Breast epithelium (tissue), 4 donors: ENCODE measurements at regions of chr5 and their contacts with region 1.

Region 1: DNA sequence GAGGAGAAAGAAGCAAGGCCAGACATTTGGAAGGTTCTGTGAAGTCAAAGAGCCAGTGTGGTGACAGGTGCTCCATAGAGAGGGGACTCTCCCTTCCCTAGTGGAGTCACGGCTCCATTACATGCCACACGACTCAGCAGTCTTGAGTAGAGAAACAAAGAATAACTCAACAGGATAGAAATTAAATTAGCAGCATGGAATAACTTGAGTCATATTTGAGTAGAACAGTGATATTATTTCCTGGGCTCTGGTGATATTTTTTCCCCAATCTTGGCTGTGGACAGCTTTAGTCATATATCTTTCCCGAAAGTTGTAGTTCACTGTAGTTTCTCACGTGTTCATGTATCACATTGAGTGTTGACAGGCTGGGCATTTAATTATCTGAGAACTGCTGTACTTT is 149.7 kb upstream of the EFNA5 start:
- DNase-seq: no peak
- H3K4me3 ChIP-seq: no peak overlapping the region
- H3K27ac ChIP-seq: no peak overlapping the region
- H3K4me1 ChIP-seq: no peaks in the 10 kb centered on the region
- H3K27me3 ChIP-seq: no peaks in the 10 kb centered on the region
- CTCF ChIP-seq: no peak
- POLR2A ChIP-seq: no peak

Region 2: GRCh38 chr5:107764976-107765804 is 55.2 kb before region 1 on chr5:
- intact Hi-C with region 1: no loop called
- DNase-seq: no peak
- H3K4me3 ChIP-seq: no peak overlapping the region
- H3K27ac ChIP-seq: no peak overlapping the region
- H3K4me1 ChIP-seq: no peaks in the 10 kb centered on the region
- H3K27me3 ChIP-seq: no peaks in the 10 kb centered on the region
- CTCF ChIP-seq: no peak
- POLR2A ChIP-seq: no peak

Region 3: GRCh38 chr5:108059334-108059733 is 238.9 kb after region 1 on chr5:
- intact Hi-C with region 1: loop called (anchors 10 kb)
- DNase-seq: no peak
- H3K4me3 ChIP-seq: no peak overlapping the region
- H3K27ac ChIP-seq: no peak overlapping the region
- H3K4me1 ChIP-seq: no peaks in the 10 kb centered on the region
- H3K27me3 ChIP-seq: no peaks in the 10 kb centered on the region
- CTCF ChIP-seq: no peak
- POLR2A ChIP-seq: no peak